Heart right ventricle (tissue), 16 donors: ENCODE measurements at regions of chr6 and their contacts with region 1.

Region 1: GRCh38 chr6:156886409-156886808 is 109.2 kb downstream of the ARID1B start:
- DNase-seq: peak in 1 of 2 donors; percentile 60
- ATAC-seq: peak; percentile 48 to 82 (median 70)
- H3K4me3 ChIP-seq: no peak overlapping the region
- H3K27ac ChIP-seq: peak overlapping the region in 8 of 10 donors; percentile 23 to 72 (median 53)
- H3K4me1 ChIP-seq: peaks cover 4 to 100% (median 82%) of the 10 kb centered on the region in 9 donors
- H3K27me3 ChIP-seq: no peaks in the 10 kb centered on the region
- CTCF ChIP-seq: no peak

Region 2: DNA sequence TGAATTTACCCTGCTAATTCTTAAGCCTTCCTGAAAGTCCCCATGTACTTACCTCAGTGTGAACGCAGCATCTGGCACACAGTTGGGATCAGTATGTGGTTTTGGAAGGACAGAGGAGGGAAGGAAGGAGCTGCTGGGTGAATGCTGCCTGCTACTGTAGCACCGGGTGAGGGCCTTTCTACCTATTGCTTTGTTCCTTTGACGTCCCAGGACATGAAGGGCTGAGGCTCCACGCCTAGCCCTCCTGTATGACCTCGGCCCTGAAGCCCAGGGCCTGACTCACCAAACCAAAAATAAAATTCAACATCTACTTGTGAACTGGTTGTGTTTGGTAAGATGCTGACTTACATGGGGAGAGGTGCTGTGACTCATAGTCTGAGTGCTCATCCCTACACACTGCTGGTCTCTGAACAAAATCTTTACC is 58.1 kb before region 1 on chr6:
- intact Hi-C with region 1: no loop called
- DNase-seq: no peak
- ATAC-seq: peak; percentile 56 to 95 (median 79)
- H3K4me3 ChIP-seq: no peak overlapping the region
- H3K27ac ChIP-seq: peak overlapping the region in 8 of 10 donors; percentile 3 to 80 (median 65)
- H3K4me1 ChIP-seq: peaks cover 4 to 90% (median 64%) of the 10 kb centered on the region in 9 donors
- H3K27me3 ChIP-seq: no peaks in the 10 kb centered on the region
- CTCF ChIP-seq: no peak

Region 3: GRCh38 chr6:156848533-156848932 is 37.9 kb before region 1 on chr6:
- intact Hi-C with region 1: loop called in 1 of 10 experiments (anchors 1 kb)
- DNase-seq: peak; percentile 81 to 89
- ATAC-seq: peak; percentile 82 to 91 (median 85)
- H3K4me3 ChIP-seq: peak overlapping the region in 5 of 10 donors; percentile 5 to 20 (median 9)
- H3K27ac ChIP-seq: peak overlapping the region in 9 of 10 donors; percentile 2 to 78 (median 66)
- H3K4me1 ChIP-seq: peaks cover 35 to 100% (median 99%) of the 10 kb centered on the region in 9 donors
- H3K27me3 ChIP-seq: no peaks in the 10 kb centered on the region
- CTCF ChIP-seq: no peak

Region 4: DNA sequence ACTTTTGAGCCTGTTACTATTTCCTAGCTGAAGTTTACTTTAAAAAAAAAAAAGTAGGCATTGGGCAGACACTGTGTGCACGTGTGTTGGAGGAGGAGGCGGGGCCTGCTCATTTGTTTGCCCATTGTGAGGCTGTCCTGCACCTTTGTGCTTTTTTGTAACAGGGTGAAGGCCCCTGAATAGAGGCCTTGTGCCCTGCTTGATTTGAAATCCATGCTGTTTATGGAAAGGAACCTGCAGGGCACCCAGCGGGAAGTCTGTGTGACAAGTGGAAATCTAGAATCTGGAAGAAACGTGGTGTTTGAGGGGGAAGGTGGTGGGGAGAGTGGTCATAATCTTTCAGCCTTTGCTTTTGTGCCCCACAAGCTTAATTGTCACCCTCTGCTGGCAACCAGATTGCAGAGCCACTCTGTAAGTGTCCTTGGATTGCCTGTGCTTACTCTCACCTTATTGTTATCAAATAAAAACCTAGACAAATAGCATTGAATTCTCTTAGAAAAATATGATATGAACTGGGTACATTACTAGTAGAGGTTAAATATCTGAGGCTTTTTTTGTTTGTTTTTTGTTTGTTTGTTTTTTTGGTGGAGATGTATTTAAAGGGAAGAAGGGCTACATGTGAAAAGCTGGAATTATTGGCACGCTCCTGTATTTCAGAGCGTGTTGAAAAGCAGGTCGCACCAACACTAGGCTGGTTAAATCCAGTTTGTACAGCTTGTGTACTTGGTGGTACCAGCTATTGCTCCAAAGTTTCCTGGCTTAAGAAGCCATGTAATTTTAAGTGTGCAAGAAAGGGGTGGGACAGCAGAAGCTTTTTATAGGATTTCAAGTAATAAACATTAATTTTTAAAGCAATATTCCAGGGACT is 47.0 kb after region 1 on chr6:
- intact Hi-C with region 1: loop called in 1 of 10 experiments (anchors 10 kb)
- DNase-seq: no peak
- ATAC-seq: peak; percentile 44 to 82 (median 71)
- H3K4me3 ChIP-seq: no peak overlapping the region
- H3K27ac ChIP-seq: peak overlapping the region; percentile 2 to 61 (median 40)
- H3K4me1 ChIP-seq: peaks cover 0 to 66% (median 41%) of the 10 kb centered on the region in 9 donors
- H3K27me3 ChIP-seq: no peaks in the 10 kb centered on the region
- CTCF ChIP-seq: peak in 4 of 9 donors; percentile 15 to 43 (median 32)

Region 5: DNA sequence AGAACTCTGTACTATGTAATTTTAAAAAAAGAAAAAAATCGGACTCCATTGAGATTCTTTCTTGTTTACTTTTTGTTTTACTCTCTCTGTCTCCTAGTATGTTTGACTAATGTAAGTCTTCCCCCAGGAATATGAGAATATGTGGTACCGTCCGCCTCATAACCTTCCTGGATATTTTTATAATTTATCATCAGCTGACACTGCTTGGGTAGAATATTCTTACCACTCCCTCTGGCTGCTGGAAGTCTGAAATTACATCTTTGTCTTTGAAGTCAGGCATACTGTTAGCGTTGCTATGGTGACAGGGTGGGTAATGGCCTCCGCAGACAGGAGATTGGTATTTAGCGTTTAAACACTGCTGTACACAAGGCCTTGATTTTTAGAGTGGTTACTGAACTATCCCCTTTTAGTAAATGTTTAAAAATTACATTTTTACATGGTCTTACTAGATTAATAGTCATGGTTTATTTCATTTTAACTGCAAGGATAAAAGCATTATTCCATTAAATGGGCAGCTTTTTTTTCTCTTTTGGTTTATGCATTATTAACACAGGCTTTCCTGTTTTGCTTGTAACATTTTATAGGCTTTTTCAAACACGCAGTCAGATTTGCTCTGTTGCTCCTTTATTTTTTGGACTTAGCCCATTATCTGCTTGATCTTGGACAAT is 67.2 kb after region 1 on chr6:
- intact Hi-C with region 1: loop called in 1 of 10 experiments (anchors 5 kb)
- DNase-seq: peak in 1 of 2 donors; percentile 68
- ATAC-seq: peak; percentile 62 to 88 (median 79)
- H3K4me3 ChIP-seq: peak overlapping the region in 6 of 10 donors; percentile 6 to 23 (median 14)
- H3K27ac ChIP-seq: peak overlapping the region in 9 of 10 donors; percentile 8 to 75 (median 36)
- H3K4me1 ChIP-seq: peaks cover 15 to 97% (median 87%) of the 10 kb centered on the region in 9 donors
- H3K27me3 ChIP-seq: no peaks in the 10 kb centered on the region
- CTCF ChIP-seq: peak in 7 of 9 donors; percentile 38 to 71 (median 44)

Region 6: GRCh38 chr6:157184202-157185020 is 298.0 kb after region 1 on chr6:
- intact Hi-C with region 1: loop called in 1 of 10 experiments (anchors 10 kb)
- DNase-seq: peak; percentile 63 to 72
- ATAC-seq: peak; percentile 66 to 87 (median 76)
- H3K4me3 ChIP-seq: peak overlapping the region in 2 of 10 donors; percentile 20 to 23
- H3K27ac ChIP-seq: peak overlapping the region in 2 of 10 donors; percentile 5 to 24
- H3K4me1 ChIP-seq: peaks cover 0 to 42% (median 23%) of the 10 kb centered on the region in 9 donors
- H3K27me3 ChIP-seq: no peaks in the 10 kb centered on the region
- CTCF ChIP-seq: peak; percentile 77 to 93 (median 90)

Region 7: GRCh38 chr6:157518397-157519250 is 632.2 kb after region 1 on chr6:
- intact Hi-C with region 1: no loop called
- DNase-seq: peak in 1 of 2 donors; percentile 40
- ATAC-seq: peak; percentile 15 to 73 (median 45)
- H3K4me3 ChIP-seq: no peak overlapping the region
- H3K27ac ChIP-seq: peak overlapping the region in 1 of 10 donors; percentile 4
- H3K4me1 ChIP-seq: peaks cover 0 to 20% (median 11%) of the 10 kb centered on the region in 9 donors
- H3K27me3 ChIP-seq: no peaks in the 10 kb centered on the region
- CTCF ChIP-seq: no peak